ENCODE measurements at regions of chr13 and their contacts with region 1.

Region 1: DNA sequence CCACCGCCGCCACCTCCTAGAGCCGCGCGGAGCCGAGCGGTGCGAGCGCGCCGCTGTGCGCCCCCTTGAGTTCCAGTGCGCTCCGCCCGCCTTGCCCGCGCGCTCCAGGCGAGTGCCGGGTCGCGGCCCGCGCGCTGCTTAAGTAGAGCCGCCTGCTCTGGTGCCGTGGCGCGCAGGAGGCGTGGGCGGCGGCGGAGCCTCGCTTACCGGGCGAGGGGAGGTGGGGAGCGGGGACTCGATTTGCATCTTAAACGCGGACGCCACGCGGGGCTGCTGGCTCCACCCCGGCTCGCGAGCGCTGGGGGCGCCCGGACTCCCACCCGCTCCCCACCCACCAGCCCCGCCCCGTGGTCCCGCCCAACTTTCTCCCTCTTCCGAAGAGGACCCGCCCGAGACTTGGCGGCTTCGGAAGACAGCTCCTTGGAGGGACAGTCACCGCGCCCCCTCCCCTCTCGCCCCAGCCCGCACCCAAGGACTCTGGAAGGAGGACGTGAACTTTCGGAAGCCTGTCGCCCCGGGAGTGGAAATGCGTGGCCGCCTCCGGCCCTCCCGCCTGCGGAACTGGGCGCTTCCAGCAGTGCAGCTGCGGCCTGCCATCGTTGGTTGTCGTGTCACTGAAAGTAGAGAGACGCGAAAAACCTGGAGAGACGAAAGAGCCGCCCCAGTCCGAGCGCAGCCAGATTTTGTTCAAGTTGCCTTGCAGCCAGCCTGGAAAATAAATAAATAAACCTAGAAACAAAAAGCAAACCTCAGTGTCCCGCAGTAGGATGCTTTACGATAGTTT is at the start of gene KCTD12:
- DNase-seq: peak; percentile 78
- H3K4me3 ChIP-seq: peak within 1 kb of the TSS; percentile 51 to 85 (median 81)
- H3K27ac ChIP-seq: peak within 1 kb of the TSS; percentile 55
- H3K4me1 ChIP-seq: peaks cover 60% of the 10 kb centered on the region
- H3K27me3 ChIP-seq: no peaks in the 10 kb centered on the region
- CTCF ChIP-seq: no peak
- total RNA-seq, gene KCTD12: 57.0 to 80.1 TPM

Region 2: GRCh38 chr13:75704579-75705320 is 1181.7 kb before region 1 on chr13:
- CTCF ChIA-PET with region 1: no interaction called
- dilution Hi-C with region 1: no loop called
- in situ Hi-C with region 1: no loop called
- intact Hi-C with region 1: loop called (anchors 2 kb)
- DNase-seq: peak; percentile 82
- H3K4me3 ChIP-seq: peak overlapping the region in 2 of 3 experiments; percentile 26 to 34
- H3K27ac ChIP-seq: peak overlapping the region; percentile 99
- H3K4me1 ChIP-seq: peaks cover 19% of the 10 kb centered on the region
- H3K27me3 ChIP-seq: no peaks in the 10 kb centered on the region
- CTCF ChIP-seq: peak; percentile 26 to 47

Region 3: DNA sequence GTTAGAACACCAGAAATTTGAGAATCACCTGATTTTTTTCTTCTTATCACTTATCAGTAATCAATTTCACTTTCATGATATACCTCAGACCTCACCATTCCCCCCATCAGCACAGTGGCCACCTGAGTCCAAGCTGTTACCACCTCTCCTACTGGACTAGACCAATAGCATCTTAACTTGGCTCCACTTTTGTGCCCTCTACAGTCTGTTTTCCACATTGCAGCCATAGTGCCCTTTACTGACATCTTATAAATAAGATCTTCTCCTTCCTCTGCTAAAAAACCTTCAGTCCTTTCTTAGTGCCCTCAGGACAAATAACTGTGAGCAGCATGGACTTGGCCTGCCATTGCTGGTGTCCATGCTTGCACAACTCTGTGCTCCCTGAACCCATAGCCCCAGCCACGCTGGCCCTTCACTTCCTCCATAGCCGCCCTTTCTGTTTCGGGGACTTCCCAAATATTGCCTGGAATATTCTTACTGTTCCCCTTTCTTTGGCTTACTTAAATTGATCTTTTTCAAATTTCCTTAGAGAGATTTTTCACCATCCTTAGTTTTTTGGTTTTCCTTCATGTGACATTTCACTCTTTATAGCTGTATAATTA is 869.6 kb before region 1 on chr13:
- CTCF ChIA-PET with region 1: no interaction called
- dilution Hi-C with region 1: no loop called
- in situ Hi-C with region 1: no loop called
- intact Hi-C with region 1: loop called (anchors 5 kb)
- DNase-seq: peak; percentile 40
- H3K4me3 ChIP-seq: no peak overlapping the region
- H3K27ac ChIP-seq: no peak overlapping the region
- H3K4me1 ChIP-seq: peaks cover 26% of the 10 kb centered on the region
- H3K27me3 ChIP-seq: no peaks in the 10 kb centered on the region
- CTCF ChIP-seq: peak; percentile 68

Region 4: GRCh38 chr13:76667551-76667950 is 218.9 kb before region 1 on chr13:
- CTCF ChIA-PET with region 1: interaction called, 4 read pairs
- dilution Hi-C with region 1: no loop called
- in situ Hi-C with region 1: loop called in 1 of 2 experiments (anchors 10 kb)
- intact Hi-C with region 1: loop called (anchors 1 kb)
- DNase-seq: peak; percentile 16
- H3K4me3 ChIP-seq: no peak overlapping the region
- H3K27ac ChIP-seq: no peak overlapping the region
- H3K4me1 ChIP-seq: no peaks in the 10 kb centered on the region
- H3K27me3 ChIP-seq: peaks cover 4% of the 10 kb centered on the region
- CTCF ChIP-seq: peak; percentile 18 to 37

Region 5: GRCh38 chr13:76822698-76823267 is 63.7 kb before region 1 on chr13:
- CTCF ChIA-PET with region 1: interaction called, 19 read pairs
- dilution Hi-C with region 1: no loop called
- in situ Hi-C with region 1: loop called in 1 of 2 experiments (anchors 5 kb)
- intact Hi-C with region 1: loop called (anchors 1 kb)
- DNase-seq: peak; percentile 46
- H3K4me3 ChIP-seq: no peak overlapping the region
- H3K27ac ChIP-seq: no peak overlapping the region
- H3K4me1 ChIP-seq: no peaks in the 10 kb centered on the region
- H3K27me3 ChIP-seq: peaks cover under 1% of the 10 kb centered on the region
- CTCF ChIP-seq: peak; percentile 27 to 63

Region 6: GRCh38 chr13:76852986-76853385 is 33.5 kb before region 1 on chr13:
- CTCF ChIA-PET with region 1: interaction called, 3 read pairs
- dilution Hi-C with region 1: no loop called
- in situ Hi-C with region 1: no loop called
- intact Hi-C with region 1: loop called (anchors 1 kb)
- DNase-seq: peak; percentile 92
- H3K4me3 ChIP-seq: no peak overlapping the region
- H3K27ac ChIP-seq: peak overlapping the region; percentile 86
- H3K4me1 ChIP-seq: peaks cover 41% of the 10 kb centered on the region
- H3K27me3 ChIP-seq: no peaks in the 10 kb centered on the region
- CTCF ChIP-seq: no peak

Region 7: DNA sequence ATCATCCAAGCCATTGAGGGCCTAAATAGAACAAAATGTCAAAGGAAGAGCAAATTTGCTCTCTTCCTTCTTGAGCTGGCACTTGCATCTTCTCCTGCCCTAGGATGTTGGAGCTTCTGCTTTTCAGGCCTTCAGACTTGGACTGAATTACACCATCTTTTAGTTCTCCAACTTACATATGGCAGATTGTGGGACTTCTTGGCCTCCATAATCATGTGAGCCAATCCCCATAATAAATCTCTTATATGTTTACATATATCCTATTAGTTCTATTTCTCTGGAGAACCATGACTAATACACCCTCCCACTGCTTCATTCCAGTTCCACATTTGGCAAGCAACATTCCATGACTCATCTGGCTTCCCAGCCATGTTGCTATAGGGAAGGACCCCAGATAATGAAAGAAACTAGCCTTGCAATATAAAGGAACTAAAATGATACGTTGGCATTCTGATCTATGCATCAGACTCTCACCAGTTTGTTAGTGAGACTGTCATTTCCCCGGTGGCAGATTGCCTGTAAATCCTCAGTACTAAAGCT is 50.9 kb after region 1 on chr13:
- CTCF ChIA-PET with region 1: no interaction called
- dilution Hi-C with region 1: no loop called
- in situ Hi-C with region 1: no loop called
- intact Hi-C with region 1: loop called (anchors 5 kb)
- DNase-seq: peak; percentile 93
- H3K4me3 ChIP-seq: no peak overlapping the region
- H3K27ac ChIP-seq: peak overlapping the region; percentile 56
- H3K4me1 ChIP-seq: peaks cover 27% of the 10 kb centered on the region
- H3K27me3 ChIP-seq: no peaks in the 10 kb centered on the region
- CTCF ChIP-seq: no peak

Region 8: GRCh38 chr13:77065461-77066147 is 179.1 kb after region 1 on chr13:
- CTCF ChIA-PET with region 1: no interaction called
- dilution Hi-C with region 1: no loop called
- in situ Hi-C with region 1: no loop called
- intact Hi-C with region 1: no loop called
- DNase-seq: no peak
- H3K4me3 ChIP-seq: no peak overlapping the region
- H3K27ac ChIP-seq: no peak overlapping the region
- H3K4me1 ChIP-seq: no peaks in the 10 kb centered on the region
- H3K27me3 ChIP-seq: no peaks in the 10 kb centered on the region
- CTCF ChIP-seq: no peak

Measured in mammary epithelial cell (primary cell).